ENCODE measurements at regions of chr5 and their contacts with region 1.

Region 1: DNA sequence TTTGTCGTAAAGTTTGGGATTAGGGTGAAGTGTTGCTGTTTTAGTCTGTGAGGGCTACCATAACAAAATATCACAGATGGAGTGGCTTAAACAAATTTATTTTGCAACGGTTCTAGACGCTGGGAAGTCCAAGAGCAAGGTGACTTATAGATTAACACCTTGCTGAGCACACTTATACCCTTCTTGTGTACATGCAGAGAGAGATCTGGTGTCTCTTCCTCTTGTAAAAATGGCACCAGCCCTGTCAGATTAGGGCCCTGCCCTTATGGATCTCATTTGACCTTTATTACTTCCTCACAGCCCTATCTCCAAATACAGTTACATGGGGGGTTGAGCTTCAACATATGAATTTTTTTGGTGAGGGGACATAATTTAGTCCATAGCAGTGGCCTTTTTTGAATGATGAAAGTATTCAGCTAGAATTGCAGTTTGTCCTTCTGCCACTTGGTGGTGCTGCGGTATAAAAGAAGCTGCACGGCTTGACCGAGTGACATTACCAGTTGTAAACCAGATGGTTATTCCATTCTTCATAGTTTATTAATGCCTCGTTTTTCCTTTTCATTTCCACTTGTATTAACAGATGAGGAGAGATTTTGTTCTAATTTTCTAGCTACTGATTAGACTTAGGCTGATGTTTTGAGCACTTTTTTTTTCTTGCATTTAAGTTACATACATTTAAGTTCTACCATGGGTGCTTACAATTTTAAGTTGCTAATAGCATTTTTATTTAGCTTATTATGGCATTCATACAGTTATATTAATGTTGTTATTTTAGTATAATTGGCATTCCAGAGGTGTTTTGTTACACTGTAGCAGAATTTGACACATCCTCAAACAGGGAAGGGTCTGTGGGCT is 19.4 kb downstream of the DCP2 start:
- DNase-seq: peak in 5 of 6 donors; percentile 35 to 77 (median 58)
- ATAC-seq: peak; percentile 76 to 96 (median 90)
- H3K4me3 ChIP-seq: no peak overlapping the region
- H3K27ac ChIP-seq: no peak overlapping the region
- H3K4me1 ChIP-seq: no peaks in the 10 kb centered on the region
- H3K27me3 ChIP-seq: no peaks in the 10 kb centered on the region
- CTCF ChIP-seq: peak; percentile 49 to 79 (median 71)

Region 2: DNA sequence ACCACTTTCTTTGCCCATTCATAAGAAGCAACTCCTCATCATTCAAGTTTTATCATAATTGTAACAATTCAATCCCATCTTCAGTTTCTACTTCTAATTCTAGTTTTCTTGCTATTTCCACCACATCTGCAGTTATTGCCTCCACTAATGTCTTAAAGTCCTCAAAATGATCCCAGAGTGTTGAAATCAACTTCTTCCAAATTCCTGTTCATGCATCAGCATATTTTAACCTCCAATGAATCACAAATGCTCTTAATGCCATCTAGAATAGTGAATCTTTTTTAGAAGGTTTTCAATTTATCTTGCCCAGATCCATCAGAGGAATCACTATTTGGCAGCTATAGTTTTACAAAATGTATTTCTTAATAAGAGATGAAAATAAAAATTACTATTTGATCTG is 138.1 kb before region 1 on chr5:
- intact Hi-C with region 1: no loop called
- DNase-seq: no peak
- ATAC-seq: no peak
- H3K4me3 ChIP-seq: no peak overlapping the region
- H3K27ac ChIP-seq: no peak overlapping the region
- H3K4me1 ChIP-seq: peaks cover 0 to 10% (median 3%) of the 10 kb centered on the region in 3 donors
- H3K27me3 ChIP-seq: no peaks in the 10 kb centered on the region
- CTCF ChIP-seq: no peak

Region 3: DNA sequence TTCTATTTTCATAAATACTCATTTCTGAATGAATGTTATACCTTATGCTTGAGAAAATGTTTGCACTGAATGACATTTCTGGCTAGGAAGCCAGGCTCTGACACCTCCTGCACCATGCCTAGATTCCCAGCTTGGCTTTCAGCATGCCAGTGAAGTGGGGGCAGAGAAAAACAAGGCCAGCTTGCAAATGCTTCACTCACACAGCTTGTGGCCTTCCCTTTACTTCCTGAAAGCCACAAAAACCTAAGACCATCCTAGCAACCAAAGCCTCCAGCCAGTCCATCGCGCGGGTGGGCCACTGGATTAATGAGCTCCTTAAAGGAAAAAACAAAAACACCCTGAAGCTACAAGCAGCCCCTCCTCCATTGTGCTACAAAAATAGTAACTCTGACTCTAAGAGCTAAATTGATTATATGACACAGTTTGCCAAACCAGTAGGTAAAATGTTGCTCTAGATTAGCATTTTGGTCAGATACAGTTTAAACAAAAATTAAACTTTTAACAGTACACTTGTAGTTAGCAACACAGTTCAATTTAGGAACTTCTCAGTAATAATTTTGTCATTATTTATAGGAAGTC is 278.9 kb after region 1 on chr5:
- intact Hi-C with region 1: no loop called
- DNase-seq: peak in 1 of 6 donors; percentile 8
- ATAC-seq: peak in 2 of 4 donors; percentile 74 to 79
- H3K4me3 ChIP-seq: no peak overlapping the region
- H3K27ac ChIP-seq: peak overlapping the region in 1 of 4 donors; percentile 2
- H3K4me1 ChIP-seq: peaks cover 0 to 21% (median 0%) of the 10 kb centered on the region in 3 donors
- H3K27me3 ChIP-seq: no peaks in the 10 kb centered on the region
- CTCF ChIP-seq: no peak

Region 4: GRCh38 chr5:113320273-113320780 is 324.3 kb after region 1 on chr5:
- intact Hi-C with region 1: loop called in 1 of 3 experiments (anchors 10 kb)
- DNase-seq: no peak
- ATAC-seq: peak in 3 of 4 donors; percentile 39 to 66 (median 56)
- H3K4me3 ChIP-seq: no peak overlapping the region
- H3K27ac ChIP-seq: no peak overlapping the region
- H3K4me1 ChIP-seq: peaks cover 5 to 8% (median 7%) of the 10 kb centered on the region in 3 donors
- H3K27me3 ChIP-seq: no peaks in the 10 kb centered on the region
- CTCF ChIP-seq: no peak